ENCODE measurements at regions of chr21 and their contacts with region 1.

Region 1: GRCh38 chr21:42145569-42146272 is 73.2 kb upstream of the ABCG1 start:
- DNase-seq: peak; percentile 57
- ATAC-seq: peak; percentile 61 to 76

Region 2: DNA sequence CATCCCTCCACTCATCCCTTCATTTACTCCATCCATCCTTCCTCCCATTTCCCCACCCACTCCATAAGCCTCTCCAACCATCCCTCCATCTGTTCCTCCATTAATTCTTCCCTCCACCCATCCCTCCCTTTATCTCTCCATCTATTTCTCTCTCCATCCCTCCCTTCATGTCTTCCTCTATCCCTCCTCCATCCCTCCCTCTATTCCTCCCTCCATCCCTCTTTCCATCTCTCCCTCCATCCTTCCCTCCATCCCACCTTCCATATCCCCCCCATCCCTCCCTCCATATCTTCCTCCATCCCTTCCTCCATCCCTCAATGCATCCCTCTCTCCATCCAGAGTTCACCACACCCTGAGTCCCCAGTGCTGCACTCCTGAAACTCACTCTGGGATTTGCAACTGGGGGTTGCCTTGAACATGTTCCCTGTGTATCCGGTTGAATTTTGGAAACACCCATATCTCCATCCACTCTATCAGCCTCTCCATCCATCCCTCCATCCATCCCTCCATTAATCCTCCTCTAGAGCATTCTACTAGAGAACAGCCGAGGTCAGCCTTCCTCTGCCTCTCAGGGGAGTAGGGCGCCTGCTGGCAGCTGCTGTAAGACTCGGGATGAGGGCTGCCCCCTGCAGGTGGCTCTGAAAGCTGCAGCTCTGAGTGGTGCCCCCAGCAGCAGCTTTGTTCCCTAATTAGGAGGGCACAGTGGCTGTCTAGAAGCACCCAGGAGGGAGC is 112.6 kb after region 1 on chr21:
- intact Hi-C with region 1: loop called in 1 of 2 experiments (anchors 5 kb)
- DNase-seq: peak; percentile 65
- ATAC-seq: peak; percentile 63

Region 3: GRCh38 chr21:42451941-42452706 is 306.4 kb after region 1 on chr21:
- intact Hi-C with region 1: loop called in 1 of 2 experiments (anchors 2 kb)
- DNase-seq: no peak
- ATAC-seq: no peak